ENCODE measurements at regions of chr18 and their contacts with region 1.

Region 1: GRCh38 chr18:62324917-62325805 is at the start of gene TNFRSF11A:
- DNase-seq: peak; percentile 62
- H3K4me3 Mint-ChIP-seq: peak within 1 kb of the TSS; percentile 97
- H3K27ac Mint-ChIP-seq: peak within 1 kb of the TSS; percentile 87
- H3K4me1 Mint-ChIP-seq: peaks cover 62% of the 10 kb centered on the region
- H3K27me3 Mint-ChIP-seq: peaks cover 34% of the 10 kb centered on the region
- total RNA-seq, gene TNFRSF11A: 22.9 and 27.1 TPM in 2 replicates

Region 2: GRCh38 chr18:62281684-62282083 is 43.5 kb before region 1 on chr18:
- intact Hi-C with region 1: loop called (anchors 5 kb)
- DNase-seq: no peak
- H3K4me3 Mint-ChIP-seq: no peak overlapping the region
- H3K27ac Mint-ChIP-seq: no peak overlapping the region
- H3K4me1 Mint-ChIP-seq: peaks cover 40% of the 10 kb centered on the region
- H3K27me3 Mint-ChIP-seq: no peaks in the 10 kb centered on the region

Region 3: GRCh38 chr18:62339106-62339988 is 14.2 kb after region 1 on chr18:
- intact Hi-C with region 1: loop called (anchors 1 kb)
- DNase-seq: no peak
- H3K4me3 Mint-ChIP-seq: peak overlapping the region; percentile 69
- H3K27ac Mint-ChIP-seq: peak overlapping the region; percentile 89
- H3K4me1 Mint-ChIP-seq: peaks cover 43% of the 10 kb centered on the region
- H3K27me3 Mint-ChIP-seq: no peaks in the 10 kb centered on the region

Region 4: DNA sequence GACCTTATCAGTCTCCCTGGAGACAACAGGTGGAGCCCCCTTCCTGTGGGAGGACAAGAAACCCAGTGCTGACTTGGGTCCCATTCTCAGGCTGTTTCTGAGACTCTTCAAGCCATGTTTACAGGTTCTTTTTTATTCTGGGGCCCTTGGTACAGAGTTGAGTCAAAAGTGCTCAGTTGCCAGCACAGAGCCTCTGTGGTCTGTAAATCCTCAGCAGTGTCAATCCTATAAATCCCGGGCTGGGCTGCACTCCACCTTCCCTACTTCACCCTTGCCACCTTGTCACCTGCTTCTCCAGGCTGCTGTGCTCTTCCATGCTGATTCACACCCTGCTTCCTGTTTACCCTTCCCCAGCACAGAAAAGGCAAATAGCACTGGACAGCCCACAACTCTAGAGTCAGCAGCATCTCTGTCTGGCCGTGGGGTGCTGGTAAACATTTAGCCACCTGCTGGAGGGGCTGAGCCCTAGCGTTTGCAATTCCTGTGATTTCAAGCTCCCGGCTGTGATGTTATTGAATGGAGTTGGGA is 74.7 kb after region 1 on chr18:
- intact Hi-C with region 1: loop called (anchors 2 kb)
- DNase-seq: no peak
- H3K4me3 Mint-ChIP-seq: no peak overlapping the region
- H3K27ac Mint-ChIP-seq: peak overlapping the region; percentile 75
- H3K4me1 Mint-ChIP-seq: peaks cover 54% of the 10 kb centered on the region
- H3K27me3 Mint-ChIP-seq: no peaks in the 10 kb centered on the region

Region 5: DNA sequence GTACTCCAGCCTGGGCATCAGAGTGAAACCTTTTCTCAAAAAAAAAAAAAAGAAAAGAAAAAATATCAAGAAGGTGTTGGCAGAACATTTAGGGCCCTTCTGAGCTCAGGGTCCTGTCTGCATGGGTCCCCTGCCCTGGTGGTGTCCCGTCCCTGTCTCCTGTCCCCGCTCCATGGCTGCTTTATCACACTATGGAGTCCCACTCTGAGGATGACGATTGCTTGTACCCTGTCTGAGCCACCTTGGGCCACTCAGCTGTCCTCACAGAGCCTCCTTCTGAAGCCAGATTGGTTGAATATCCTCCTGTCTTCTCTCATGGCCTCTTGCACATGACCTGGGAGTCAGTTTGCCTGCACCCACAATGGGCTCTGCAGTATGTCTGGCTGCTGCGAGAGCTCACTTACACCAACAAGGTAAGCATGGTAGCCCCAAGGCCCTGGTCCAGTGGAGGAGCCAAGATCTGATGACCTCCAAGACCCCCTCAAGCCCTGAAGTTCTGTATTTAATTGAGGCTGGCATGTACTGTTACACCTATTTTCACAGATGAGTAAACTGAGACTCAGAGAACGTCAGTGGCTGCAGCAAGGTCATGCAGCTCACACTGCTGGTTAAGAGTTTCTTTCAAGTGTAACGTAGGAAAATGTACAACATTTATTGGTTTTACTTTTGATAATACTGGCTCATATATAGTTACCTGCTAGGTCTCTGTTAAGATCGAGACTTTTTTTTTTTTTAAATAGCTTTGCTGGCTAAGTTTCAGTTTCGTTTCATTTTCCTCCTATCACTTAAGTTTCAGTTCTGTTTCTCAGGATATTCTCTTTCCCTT is 180.7 kb after region 1 on chr18:
- intact Hi-C with region 1: loop called (anchors 1 kb)
- DNase-seq: peak; percentile 25
- H3K4me3 Mint-ChIP-seq: peak overlapping the region; percentile 81
- H3K27ac Mint-ChIP-seq: peak overlapping the region; percentile 96
- H3K4me1 Mint-ChIP-seq: peaks cover 23% of the 10 kb centered on the region
- H3K27me3 Mint-ChIP-seq: peaks cover 2% of the 10 kb centered on the region